HepG2 (cell line): ENCODE measurements at regions of chr4 and their contacts with region 1.

Region 1: DNA sequence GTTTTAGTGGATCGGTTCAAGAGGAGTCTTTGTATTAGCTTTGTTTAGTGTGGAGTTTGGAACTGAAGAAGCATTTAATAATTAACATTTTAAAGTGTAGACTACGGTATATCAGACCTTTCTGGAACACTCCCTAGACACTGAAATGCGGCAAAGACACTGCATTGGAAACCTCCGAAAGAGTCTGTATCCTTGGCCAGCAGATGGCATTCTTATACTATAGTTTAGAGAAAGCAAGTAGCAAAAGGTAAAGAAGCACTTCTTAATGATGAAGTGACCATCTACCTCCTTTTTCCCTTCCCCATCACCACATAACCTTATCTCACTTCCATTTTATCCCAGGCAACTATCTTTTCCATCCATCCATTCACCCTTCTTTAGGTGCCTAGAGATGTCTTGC is 7.6 kb downstream of the FABP2 start:
- DNase-seq: peak; percentile 41
- ATAC-seq: peak; percentile 75
- H3K4me3 ChIP-seq: no peak overlapping the region
- H3K27ac ChIP-seq: no peak overlapping the region
- H3K4me1 ChIP-seq: no peaks in the 10 kb centered on the region
- H3K27me3 ChIP-seq: no peaks in the 10 kb centered on the region
- CTCF ChIP-seq: peak; percentile 61
- EP300 ChIP-seq: no peak
- POLR2A ChIP-seq: no peak
- RAD21 ChIP-seq: peak; percentile 38; the same call in 1 of the 2 replicates

Region 2: GRCh38 chr4:119490335-119490734 is 176.0 kb after region 1 on chr4:
- CTCF ChIA-PET with region 1: interaction called, 3 read pairs
- POLR2A ChIA-PET with region 1: no interaction called
- in situ Hi-C with region 1: loop called (anchors 10 kb)
- intact Hi-C with region 1: loop called (anchors 5 kb)
- DNase-seq: no peak
- ATAC-seq: peak; percentile 84
- H3K4me3 ChIP-seq: no peak overlapping the region
- H3K27ac ChIP-seq: no peak overlapping the region
- H3K4me1 ChIP-seq: no peaks in the 10 kb centered on the region
- H3K27me3 ChIP-seq: no peaks in the 10 kb centered on the region
- CTCF ChIP-seq: peak; percentile 33; the same call in 1 of the 2 replicates
- EP300 ChIP-seq: no peak
- POLR2A ChIP-seq: no peak
- RAD21 ChIP-seq: no peak